Activated naive CD4-positive, alpha-beta T cell treated with anti-CD3 and anti-CD28 coated beads for 36 hours (primary cell): ENCODE measurements at regions of chr19 and their contacts with region 1.

Region 1: DNA sequence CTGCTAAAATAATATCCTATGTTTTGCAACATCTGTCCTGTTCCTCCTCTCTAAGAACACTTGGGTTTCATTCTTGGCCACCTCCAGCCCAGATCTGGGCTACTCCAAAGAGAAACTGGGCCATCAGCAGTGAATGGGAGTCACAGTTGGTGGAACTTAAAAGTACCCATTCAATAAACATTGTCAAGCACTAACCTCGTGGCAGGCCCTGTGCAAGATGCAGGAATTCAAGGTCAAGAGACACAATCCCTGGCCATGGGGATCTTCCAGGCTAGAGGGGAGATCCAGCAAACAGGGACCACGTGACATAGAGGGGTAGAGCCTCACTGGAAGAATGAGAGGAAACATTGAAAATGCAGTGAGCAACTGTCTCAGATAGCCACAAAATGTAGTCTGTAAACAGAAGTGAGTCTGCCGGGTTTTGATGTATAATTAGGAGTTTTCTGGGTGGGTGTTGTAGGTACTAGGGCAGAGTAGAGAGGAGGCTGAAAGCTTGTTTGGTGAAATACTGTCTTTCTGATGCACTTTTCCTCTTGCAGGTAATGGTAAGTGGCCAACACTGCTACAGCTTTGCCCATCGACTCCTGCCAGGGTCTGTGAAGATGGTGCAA is 14.8 kb upstream of the EID2 start:
- DNase-seq: no peak
- H3K4me3 Mint-ChIP-seq: no peak overlapping the region
- H3K27ac Mint-ChIP-seq: no peak overlapping the region
- H3K4me1 Mint-ChIP-seq: peaks cover 33% of the 10 kb centered on the region
- H3K27me3 Mint-ChIP-seq: no peaks in the 10 kb centered on the region

Region 2: GRCh38 chr19:39568604-39569003 is 13.8 kb after region 1 on chr19:
- CTCF ChIA-PET with region 1: no interaction called
- intact Hi-C with region 1: no loop called
- DNase-seq: no peak
- H3K4me3 Mint-ChIP-seq: no peak overlapping the region
- H3K27ac Mint-ChIP-seq: no peak overlapping the region
- H3K4me1 Mint-ChIP-seq: no peaks in the 10 kb centered on the region
- H3K27me3 Mint-ChIP-seq: peaks cover 9% of the 10 kb centered on the region

Region 3: GRCh38 chr19:39631178-39631577 is 76.4 kb after region 1 on chr19:
- CTCF ChIA-PET with region 1: interaction called, 4 read pairs
- intact Hi-C with region 1: loop called (anchors 2 kb)
- DNase-seq: no peak
- H3K4me3 Mint-ChIP-seq: no peak overlapping the region
- H3K27ac Mint-ChIP-seq: no peak overlapping the region
- H3K4me1 Mint-ChIP-seq: no peaks in the 10 kb centered on the region
- H3K27me3 Mint-ChIP-seq: peaks cover 7% of the 10 kb centered on the region